GM13976 (cell line): ENCODE measurements at regions of chr5 and their contacts with region 1.

Region 1: GRCh38 chr5:135829681-135830383 is 4.6 kb upstream of the SLC25A48 start:
- DNase-seq: peak; percentile 79
- CTCF ChIP-seq: peak; percentile 58

Region 2: GRCh38 chr5:135466178-135467050 is 363.4 kb before region 1 on chr5:
- in situ Hi-C with region 1: loop called (anchors 25 kb)
- DNase-seq: peak; percentile 87
- CTCF ChIP-seq: peak; percentile 87

Region 3: GRCh38 chr5:135560858-135561257 is 269.0 kb before region 1 on chr5:
- in situ Hi-C with region 1: loop called (anchors 10 kb)
- DNase-seq: peak; percentile 83
- CTCF ChIP-seq: peak; percentile 77

Region 4: GRCh38 chr5:135977375-135977928 is 147.6 kb after region 1 on chr5:
- in situ Hi-C with region 1: no loop called
- DNase-seq: peak; percentile 63
- CTCF ChIP-seq: peak; percentile 89

Region 5: DNA sequence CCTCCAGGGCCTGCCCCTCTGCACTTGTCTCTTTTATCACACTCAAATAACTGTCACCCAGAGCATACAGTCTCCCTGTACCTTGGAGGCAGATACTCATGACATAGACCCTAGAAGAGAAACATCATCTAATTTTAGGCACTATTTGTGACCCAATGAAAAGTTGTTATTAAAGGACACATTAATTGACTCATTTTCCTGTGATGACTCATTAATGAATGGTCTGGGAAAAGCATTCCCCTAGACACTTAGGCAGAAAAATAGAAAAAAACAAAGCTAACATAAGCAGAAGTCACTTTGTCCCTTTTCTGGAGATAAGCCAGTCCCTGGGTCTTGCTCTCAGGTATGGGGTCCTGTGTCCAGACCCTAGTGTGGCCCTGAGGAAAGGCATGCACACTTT is 520.5 kb after region 1 on chr5:
- in situ Hi-C with region 1: no loop called
- DNase-seq: no peak
- CTCF ChIP-seq: no peak